HepG2 (cell line): ENCODE measurements at regions of chr2 and their contacts with region 1.

Region 1: DNA sequence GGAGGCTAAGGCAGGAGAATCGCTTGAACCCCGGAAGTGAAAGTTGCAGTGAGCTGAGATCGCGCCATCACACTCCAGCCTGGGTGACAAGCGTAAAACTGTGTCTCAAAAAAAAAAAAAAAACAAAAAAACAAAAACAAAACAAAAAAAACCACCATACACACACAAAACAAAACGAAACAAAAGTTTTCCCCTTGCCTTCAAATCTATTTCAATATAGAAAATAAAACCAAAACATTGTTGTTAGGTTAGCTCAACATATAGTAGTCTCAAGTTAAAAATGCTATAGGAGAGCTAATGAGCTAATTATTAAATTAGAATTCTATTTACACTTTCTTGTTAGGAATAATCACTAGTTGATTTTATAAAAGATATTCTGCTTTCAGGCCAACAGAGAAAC is 43.3 kb downstream of the FBXO11 start:
- DNase-seq: no peak
- ATAC-seq: no peak
- H3K4me3 ChIP-seq: no peak overlapping the region
- H3K27ac ChIP-seq: no peak overlapping the region
- H3K4me1 ChIP-seq: peaks cover 15% of the 10 kb centered on the region; the same call in 1 of the 2 replicates
- H3K27me3 ChIP-seq: no peaks in the 10 kb centered on the region
- CTCF ChIP-seq: no peak
- EP300 ChIP-seq: no peak
- POLR2A ChIP-seq: no peak
- RAD21 ChIP-seq: no peak

Region 2: DNA sequence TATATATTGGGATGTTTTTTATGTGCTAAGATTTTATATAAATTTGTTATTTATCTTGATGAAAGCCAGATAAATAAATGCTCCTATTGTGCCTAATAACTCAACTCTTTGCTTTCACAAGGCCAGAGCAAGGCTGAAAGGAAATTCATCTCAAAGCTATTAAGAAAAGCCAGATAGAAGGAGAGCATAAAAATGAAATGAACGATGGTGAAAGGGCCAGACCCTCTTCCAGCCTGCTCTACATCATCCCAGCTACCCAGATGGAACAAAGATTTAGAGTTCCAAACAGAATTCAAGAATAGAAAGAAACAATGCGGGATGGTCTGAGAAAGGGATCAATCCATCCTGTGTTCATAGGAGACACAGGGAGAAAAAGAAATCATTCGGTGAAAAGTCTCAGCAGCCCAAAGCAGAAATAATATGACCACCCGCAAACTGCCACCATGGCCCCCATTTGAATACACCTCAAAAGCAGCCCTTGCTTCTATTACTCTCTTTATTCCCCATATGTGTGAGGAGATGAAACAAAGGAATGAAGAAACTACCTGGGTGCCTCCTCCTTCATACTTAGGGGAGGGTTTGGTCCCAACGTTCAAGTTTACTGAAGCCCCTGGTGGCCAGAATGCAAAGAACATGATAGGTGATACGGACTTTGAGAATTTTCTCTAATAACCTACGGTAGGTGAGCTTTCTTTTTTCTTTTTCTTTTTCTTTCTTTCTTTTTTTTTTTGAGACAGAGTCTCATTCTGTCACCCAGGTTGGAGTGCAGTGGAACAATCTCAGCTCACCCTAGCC is 153.5 kb after region 1 on chr2:
- CTCF ChIA-PET with region 1: interaction called, 4 read pairs
- POLR2A ChIA-PET with region 1: no interaction called
- in situ Hi-C with region 1: no loop called
- intact Hi-C with region 1: loop called (anchors 5 kb)
- DNase-seq: peak; percentile 43
- ATAC-seq: peak; percentile 94
- H3K4me3 ChIP-seq: no peak overlapping the region
- H3K27ac ChIP-seq: no peak overlapping the region
- H3K4me1 ChIP-seq: no peaks in the 10 kb centered on the region
- H3K27me3 ChIP-seq: no peaks in the 10 kb centered on the region; a peak in 2 of 5 replicates
- CTCF ChIP-seq: peak; percentile 43
- EP300 ChIP-seq: no peak
- POLR2A ChIP-seq: no peak
- RAD21 ChIP-seq: no peak

Region 3: GRCh38 chr2:48107326-48107925 is 244.5 kb after region 1 on chr2:
- CTCF ChIA-PET with region 1: interaction called, 25 read pairs
- POLR2A ChIA-PET with region 1: no interaction called
- in situ Hi-C with region 1: loop called (anchors 5 kb)
- intact Hi-C with region 1: no loop called
- DNase-seq: peak; percentile 39
- ATAC-seq: no peak
- H3K4me3 ChIP-seq: peak overlapping the region in 1 of 3 experiments; percentile 74; a peak in 2 of 6 replicates
- H3K27ac ChIP-seq: no peak overlapping the region
- H3K4me1 ChIP-seq: peaks cover 51% of the 10 kb centered on the region
- H3K27me3 ChIP-seq: peaks cover 0 to 3% of the 10 kb centered on the region in 2 experiments; a peak in 1 of 5 replicates
- CTCF ChIP-seq: no peak
- EP300 ChIP-seq: peak in 1 of 2 experiments; percentile 10; a peak in 1 of 4 replicates
- POLR2A ChIP-seq: no peak
- RAD21 ChIP-seq: no peak